ENCODE measurements at regions of chr12 and their contacts with region 1.

Region 1: DNA sequence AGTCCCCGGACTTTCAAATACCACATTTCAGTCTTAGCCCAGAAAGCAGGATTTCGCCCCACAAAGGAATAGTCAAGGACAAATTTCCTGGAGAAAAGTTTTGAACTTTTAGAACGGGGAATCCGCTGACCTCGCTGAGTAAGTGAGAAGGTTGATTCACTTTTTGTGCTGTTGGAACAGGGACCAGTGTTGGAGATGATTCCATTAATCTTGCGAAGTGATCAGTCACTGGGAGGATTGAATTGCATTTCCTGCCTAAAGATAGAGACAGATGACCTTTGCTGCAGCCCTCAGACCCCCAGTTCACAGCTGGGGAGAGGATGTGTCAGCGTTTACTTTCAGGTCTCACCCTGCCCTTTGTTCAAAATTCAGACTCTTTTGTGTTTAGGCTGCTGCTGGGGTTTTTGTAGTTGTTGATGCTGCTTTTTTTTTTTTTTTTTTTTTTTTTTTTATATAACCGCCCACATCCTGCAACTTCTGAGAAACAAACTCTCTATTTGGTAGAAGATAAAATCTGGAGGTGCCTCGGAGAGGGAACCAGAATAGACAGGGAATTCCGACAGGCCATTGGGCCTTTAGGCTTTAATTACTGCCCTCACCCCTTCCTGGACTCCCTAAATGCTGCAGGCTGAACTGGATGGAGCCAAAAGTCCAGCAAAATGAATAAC is 9.8 kb upstream of the KDM2B start:
- DNase-seq: peak; percentile 38 to 88 (median 83)
- ATAC-seq: peak; percentile 81
- H3K4me3 ChIP-seq: peak overlapping the region; percentile 76
- H3K4me3 Mint-ChIP-seq: peak overlapping the region; percentile 59 to 94 (median 90)
- H3K27ac ChIP-seq: peak overlapping the region; percentile 90
- H3K27ac Mint-ChIP-seq: peak overlapping the region; percentile 97 to 100 (median 99)
- H3K4me1 ChIP-seq: peaks cover 24 to 26% of the 10 kb centered on the region in 2 donors
- H3K4me1 Mint-ChIP-seq: peaks cover 16 to 53% (median 38%) of the 10 kb centered on the region in 7 donors
- H3K27me3 ChIP-seq: no peaks in the 10 kb centered on the region
- H3K27me3 Mint-ChIP-seq: peaks cover 0 to 3% (median 0%) of the 10 kb centered on the region in 5 donors

Region 2: GRCh38 chr12:121536899-121537813 is 53.5 kb before region 1 on chr12:
- CTCF ChIA-PET with region 1: no interaction called
- POLR2A ChIA-PET with region 1: interaction called, 5 read pairs
- intact Hi-C with region 1: loop called in 1 of 2 experiments (anchors 2 kb)
- DNase-seq: peak in 8 of 9 donors; percentile 20 to 70 (median 28)
- ATAC-seq: peak; percentile 51
- H3K4me3 ChIP-seq: peak overlapping the region; percentile 62
- H3K4me3 Mint-ChIP-seq: peak overlapping the region; percentile 51 to 91 (median 81)
- H3K27ac ChIP-seq: peak overlapping the region; percentile 74
- H3K27ac Mint-ChIP-seq: peak overlapping the region; percentile 43 to 97 (median 92)
- H3K4me1 ChIP-seq: peaks cover 29 to 36% of the 10 kb centered on the region in 2 donors
- H3K4me1 Mint-ChIP-seq: peaks cover 21 to 56% (median 44%) of the 10 kb centered on the region in 7 donors
- H3K27me3 ChIP-seq: no peaks in the 10 kb centered on the region
- H3K27me3 Mint-ChIP-seq: peaks cover 0 to 4% (median 0%) of the 10 kb centered on the region in 5 donors

Region 3: DNA sequence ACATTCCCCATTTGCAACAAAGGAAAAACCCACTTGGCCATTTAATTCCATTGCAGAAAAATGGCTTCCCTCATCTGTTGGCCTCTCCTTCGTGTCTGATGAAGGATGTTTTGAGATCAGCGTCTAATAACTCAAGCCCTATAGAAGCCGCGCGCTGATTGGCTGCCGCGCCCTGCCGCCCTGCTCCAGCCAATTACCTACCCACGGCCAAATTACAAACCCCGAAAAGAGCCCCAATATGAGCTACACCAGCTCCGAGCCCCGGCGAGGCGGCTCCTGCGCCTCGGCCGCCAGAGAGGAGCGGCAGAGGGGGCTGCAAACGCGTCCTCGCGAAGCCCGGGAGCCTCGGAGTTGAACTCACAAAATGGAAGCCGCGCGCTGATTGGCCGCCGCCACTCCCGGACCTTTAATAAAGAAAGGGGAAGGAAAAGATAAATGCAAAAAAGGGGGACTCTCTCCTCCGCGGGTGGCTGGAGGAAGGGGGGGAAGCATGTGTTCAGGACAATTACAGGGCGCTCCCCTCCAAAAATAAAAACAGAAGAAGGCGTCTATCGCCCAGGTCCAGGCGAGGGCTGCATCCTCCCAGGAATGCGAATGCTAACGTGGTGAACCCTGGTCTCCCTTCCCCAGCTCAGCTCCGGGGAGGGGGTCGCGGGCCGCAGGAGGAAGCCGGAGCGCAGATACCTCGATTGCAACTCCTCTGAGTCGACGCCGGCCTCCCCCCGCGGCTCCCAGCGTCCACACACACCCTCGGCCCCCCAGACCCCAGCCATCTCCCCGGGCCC is 212.4 kb after region 1 on chr12:
- CTCF ChIA-PET with region 1: no interaction called
- POLR2A ChIA-PET with region 1: interaction called, 13 read pairs
- intact Hi-C with region 1: no loop called
- DNase-seq: peak; percentile 84 to 94 (median 92)
- ATAC-seq: peak; percentile 65
- H3K4me3 ChIP-seq: peak overlapping the region; percentile 94
- H3K4me3 Mint-ChIP-seq: peak overlapping the region; percentile 89 to 99 (median 96)
- H3K27ac ChIP-seq: peak overlapping the region; percentile 96
- H3K27ac Mint-ChIP-seq: peak overlapping the region; percentile 98 to 100 (median 99)
- H3K4me1 ChIP-seq: peaks cover 21 to 28% of the 10 kb centered on the region in 2 donors
- H3K4me1 Mint-ChIP-seq: peaks cover 25 to 37% (median 29%) of the 10 kb centered on the region in 7 donors
- H3K27me3 ChIP-seq: no peaks in the 10 kb centered on the region
- H3K27me3 Mint-ChIP-seq: no peaks in the 10 kb centered on the region

Measured in naive thymus-derived CD4-positive, alpha-beta T cell (primary cell).